ENCODE measurements at regions of chr2 and their contacts with region 1.

Region 1: GRCh38 chr2:160353166-160353565 is 140.4 kb downstream of the RBMS1 start:
- DNase-seq: peak in 4 of 5 donors; percentile 26 to 37 (median 32)
- H3K4me3 ChIP-seq: no peak overlapping the region
- H3K4me3 Mint-ChIP-seq: peak overlapping the region in 2 of 8 donors; percentile 4 to 45
- H3K27ac ChIP-seq: no peak overlapping the region
- H3K27ac Mint-ChIP-seq: peak overlapping the region in 2 of 7 donors; percentile 44 to 67
- H3K4me1 ChIP-seq: peaks cover 27% of the 10 kb centered on the region
- H3K4me1 Mint-ChIP-seq: peaks cover 50 to 87% (median 73%) of the 10 kb centered on the region in 4 donors
- H3K27me3 ChIP-seq: no peaks in the 10 kb centered on the region
- H3K27me3 Mint-ChIP-seq: no peaks in the 10 kb centered on the region

Region 2: DNA sequence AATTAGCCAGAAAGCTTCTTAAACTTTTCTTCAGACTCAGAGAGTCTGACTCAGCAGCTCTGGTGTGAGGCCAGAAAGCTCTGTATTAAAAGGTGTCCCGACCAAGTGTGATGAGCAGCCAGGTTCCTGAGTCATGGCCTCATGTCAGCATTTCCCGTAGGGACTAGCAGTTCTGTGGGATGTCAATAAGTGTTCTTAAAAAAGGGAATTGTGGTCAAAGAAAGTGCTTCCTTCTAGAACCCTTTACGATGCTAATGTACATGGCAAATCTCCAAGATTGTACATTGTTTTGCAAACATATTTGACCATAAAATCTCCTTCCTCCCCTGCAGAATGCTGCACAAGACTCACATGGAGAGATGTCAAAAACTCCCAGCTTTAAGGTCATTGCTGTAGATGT is 370.9 kb before region 1 on chr2:
- CTCF ChIA-PET with region 1: no interaction called
- POLR2A ChIA-PET with region 1: no interaction called
- intact Hi-C with region 1: no loop called
- DNase-seq: no peak
- H3K4me3 ChIP-seq: no peak overlapping the region
- H3K4me3 Mint-ChIP-seq: no peak overlapping the region
- H3K27ac ChIP-seq: no peak overlapping the region
- H3K27ac Mint-ChIP-seq: no peak overlapping the region
- H3K4me1 ChIP-seq: no peaks in the 10 kb centered on the region
- H3K4me1 Mint-ChIP-seq: no peaks in the 10 kb centered on the region
- H3K27me3 ChIP-seq: no peaks in the 10 kb centered on the region
- H3K27me3 Mint-ChIP-seq: peaks cover 12 to 29% of the 10 kb centered on the region in 2 donors

Region 3: DNA sequence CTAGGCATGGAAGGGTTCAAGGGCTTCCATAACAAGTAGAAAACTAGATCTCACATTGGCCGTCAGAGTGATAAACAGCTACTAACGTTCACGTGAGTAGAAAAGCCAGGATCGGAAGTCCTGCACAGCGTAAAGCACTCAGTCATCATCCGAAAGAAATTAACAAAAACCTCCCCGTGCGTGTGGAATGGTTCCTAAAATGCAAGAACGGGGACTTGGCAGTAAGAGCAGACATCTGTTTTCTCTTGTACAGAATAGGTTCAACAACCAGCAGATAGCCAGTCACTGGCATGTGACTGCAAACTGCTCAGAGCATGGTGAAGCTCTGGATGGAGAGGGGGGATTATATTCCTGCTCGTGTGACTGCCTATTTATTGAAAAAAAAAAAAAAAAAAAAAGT is 46.2 kb before region 1 on chr2:
- CTCF ChIA-PET with region 1: no interaction called
- POLR2A ChIA-PET with region 1: no interaction called
- intact Hi-C with region 1: no loop called
- DNase-seq: no peak
- H3K4me3 ChIP-seq: no peak overlapping the region
- H3K4me3 Mint-ChIP-seq: no peak overlapping the region
- H3K27ac ChIP-seq: no peak overlapping the region
- H3K27ac Mint-ChIP-seq: no peak overlapping the region
- H3K4me1 ChIP-seq: no peaks in the 10 kb centered on the region
- H3K4me1 Mint-ChIP-seq: peaks cover 9 to 34% (median 22%) of the 10 kb centered on the region in 4 donors
- H3K27me3 ChIP-seq: no peaks in the 10 kb centered on the region
- H3K27me3 Mint-ChIP-seq: no peaks in the 10 kb centered on the region

Region 4: GRCh38 chr2:160338901-160339685 is 14.1 kb before region 1 on chr2:
- CTCF ChIA-PET with region 1: interaction called, 12 read pairs
- POLR2A ChIA-PET with region 1: interaction called, 4 read pairs
- intact Hi-C with region 1: no loop called
- DNase-seq: no peak
- H3K4me3 ChIP-seq: no peak overlapping the region
- H3K4me3 Mint-ChIP-seq: peak overlapping the region in 3 of 8 donors; percentile 20 to 54 (median 35)
- H3K27ac ChIP-seq: no peak overlapping the region
- H3K27ac Mint-ChIP-seq: peak overlapping the region; percentile 2 to 71 (median 30)
- H3K4me1 ChIP-seq: peaks cover 76% of the 10 kb centered on the region
- H3K4me1 Mint-ChIP-seq: peaks cover 58 to 90% (median 76%) of the 10 kb centered on the region in 4 donors
- H3K27me3 ChIP-seq: no peaks in the 10 kb centered on the region
- H3K27me3 Mint-ChIP-seq: no peaks in the 10 kb centered on the region

Region 5: GRCh38 chr2:160493227-160494028 is 140.3 kb after region 1 on chr2 and contains the start of gene RBMS1:
- CTCF ChIA-PET with region 1: no interaction called
- POLR2A ChIA-PET with region 1: no interaction called
- intact Hi-C with region 1: no loop called
- DNase-seq: peak; percentile 47 to 69 (median 51)
- H3K4me3 ChIP-seq: peak within 1 kb of the TSS; percentile 49 to 64
- H3K4me3 Mint-ChIP-seq: peak within 1 kb of the TSS; percentile 91 to 98 (median 95)
- H3K27ac ChIP-seq: peak within 1 kb of the TSS; percentile 81
- H3K27ac Mint-ChIP-seq: peak within 1 kb of the TSS; percentile 85 to 97 (median 90)
- H3K4me1 ChIP-seq: peaks cover 43% of the 10 kb centered on the region
- H3K4me1 Mint-ChIP-seq: peaks cover 21 to 46% (median 32%) of the 10 kb centered on the region in 4 donors
- H3K27me3 ChIP-seq: no peaks in the 10 kb centered on the region
- H3K27me3 Mint-ChIP-seq: no peaks in the 10 kb centered on the region
- total RNA-seq, gene RBMS1: 101 to 103 TPM

Region 6: DNA sequence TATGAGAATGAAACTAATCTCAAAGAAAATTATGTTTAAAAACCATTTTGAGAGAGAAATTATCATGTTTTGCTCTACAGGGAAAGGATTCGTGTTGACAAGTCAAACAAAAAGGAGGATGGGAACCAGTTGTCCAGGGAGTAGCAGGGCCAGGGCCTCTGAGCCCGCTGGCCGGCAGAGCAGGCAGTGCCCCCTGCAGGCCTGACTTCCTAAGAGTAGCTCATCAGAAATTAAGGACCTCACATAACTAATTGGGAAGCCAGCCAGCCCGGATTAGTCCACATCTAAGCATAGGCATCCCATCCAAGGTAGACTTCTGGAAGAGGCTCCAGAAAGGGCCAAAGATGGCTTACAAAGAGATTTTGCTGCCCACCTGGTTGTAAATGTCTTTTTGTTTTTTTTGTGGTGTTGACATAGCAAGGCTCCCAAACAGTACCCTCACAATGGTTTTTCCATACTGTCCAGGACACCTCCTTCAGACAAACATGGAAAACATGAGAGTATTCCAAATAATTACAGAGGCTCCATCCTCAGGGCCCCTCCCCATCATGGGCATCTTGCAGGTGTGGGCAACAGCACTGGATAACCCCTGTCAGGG is 565.8 kb after region 1 on chr2:
- CTCF ChIA-PET with region 1: interaction called, 16 read pairs
- POLR2A ChIA-PET with region 1: no interaction called
- intact Hi-C with region 1: loop called (anchors 2 kb)
- DNase-seq: peak in 3 of 5 donors; percentile 6 to 18 (median 13)
- H3K4me3 ChIP-seq: no peak overlapping the region
- H3K4me3 Mint-ChIP-seq: no peak overlapping the region
- H3K27ac ChIP-seq: no peak overlapping the region
- H3K27ac Mint-ChIP-seq: no peak overlapping the region
- H3K4me1 ChIP-seq: no peaks in the 10 kb centered on the region
- H3K4me1 Mint-ChIP-seq: no peaks in the 10 kb centered on the region
- H3K27me3 ChIP-seq: no peaks in the 10 kb centered on the region
- H3K27me3 Mint-ChIP-seq: no peaks in the 10 kb centered on the region